Activated CD4-positive, alpha-beta T cell treated with anti-CD3 and anti-CD28 coated beads for 36 hours (primary cell): ENCODE measurements at regions of chr15 and their contacts with region 1.

Region 1: GRCh38 chr15:66497502-66498455 is at the start of gene SNAPC5:
- DNase-seq: peak; percentile 99
- ATAC-seq: peak; percentile 90
- H3K4me3 Mint-ChIP-seq: peak within 1 kb of the TSS; percentile 85
- H3K27ac Mint-ChIP-seq: peak within 1 kb of the TSS; percentile 93
- H3K4me1 Mint-ChIP-seq: peaks cover 56% of the 10 kb centered on the region
- H3K27me3 Mint-ChIP-seq: no peaks in the 10 kb centered on the region
- total RNA-seq, gene SNAPC5: 25.7 to 30.1 TPM

Region 2: GRCh38 chr15:65494071-65494470 is 1003.7 kb before region 1 on chr15:
- CTCF ChIA-PET with region 1: no interaction called
- POLR2A ChIA-PET with region 1: interaction called, 11 read pairs
- intact Hi-C with region 1: no loop called
- DNase-seq: no peak
- ATAC-seq: no peak
- H3K4me3 Mint-ChIP-seq: no peak overlapping the region
- H3K27ac Mint-ChIP-seq: no peak overlapping the region
- H3K4me1 Mint-ChIP-seq: no peaks in the 10 kb centered on the region
- H3K27me3 Mint-ChIP-seq: no peaks in the 10 kb centered on the region

Region 3: DNA sequence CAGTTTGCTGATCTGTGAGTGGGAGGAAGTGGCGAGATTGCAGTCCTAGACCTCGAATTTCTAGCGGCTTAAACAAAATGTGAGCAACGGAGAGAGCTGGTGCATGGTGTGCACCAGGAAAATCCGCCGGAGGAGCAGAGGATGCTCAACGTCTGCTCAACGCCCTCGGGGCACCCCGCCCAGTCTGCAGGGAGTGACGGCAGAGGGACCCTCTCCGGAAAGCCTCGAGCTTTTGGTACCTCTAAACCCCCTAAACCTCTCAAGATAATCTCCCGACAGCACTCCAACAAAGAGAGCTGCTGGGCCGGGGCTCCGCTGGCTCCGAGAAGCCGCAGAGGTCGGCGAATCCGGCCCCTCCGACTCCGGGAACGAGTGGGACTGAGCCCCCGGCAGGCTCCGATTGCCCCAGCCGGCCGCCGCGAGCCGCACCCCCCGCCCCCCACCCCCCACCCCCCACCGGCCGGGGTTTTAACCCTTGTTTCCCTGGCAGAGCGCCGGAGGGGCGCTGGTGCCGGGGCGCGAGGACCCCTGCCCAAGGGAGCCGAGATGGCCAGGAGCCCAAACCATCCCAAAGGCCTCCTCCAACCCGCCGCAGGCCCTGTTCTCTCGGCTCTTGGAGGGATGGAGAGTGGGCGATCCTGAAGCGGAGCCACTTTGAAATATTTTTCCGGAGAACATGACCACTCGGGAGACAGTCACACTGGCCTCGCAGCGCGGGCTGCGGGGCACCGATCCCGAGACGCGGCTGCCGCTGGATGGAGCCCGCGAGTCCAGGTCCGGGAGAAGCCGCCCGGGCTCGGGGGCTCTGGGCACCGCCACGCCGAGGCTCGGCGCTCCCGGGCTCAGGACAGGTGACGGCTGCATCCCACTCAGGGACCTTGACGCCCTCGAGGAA is 245.7 kb before region 1 on chr15:
- CTCF ChIA-PET with region 1: interaction called, 4 read pairs
- POLR2A ChIA-PET with region 1: no interaction called
- intact Hi-C with region 1: loop called in 1 of 2 experiments (anchors 1 kb)
- DNase-seq: peak; percentile 73
- ATAC-seq: peak; percentile 75
- H3K4me3 Mint-ChIP-seq: peak overlapping the region; percentile 53
- H3K27ac Mint-ChIP-seq: no peak overlapping the region
- H3K4me1 Mint-ChIP-seq: peaks cover 6% of the 10 kb centered on the region
- H3K27me3 Mint-ChIP-seq: peaks cover 58% of the 10 kb centered on the region

Region 4: GRCh38 chr15:66293419-66294156 is 204.2 kb before region 1 on chr15 and contains the start of gene DIS3L:
- CTCF ChIA-PET with region 1: interaction called, 9 read pairs
- POLR2A ChIA-PET with region 1: interaction called, 3 read pairs
- intact Hi-C with region 1: loop called (anchors 1 to 2 kb)
- DNase-seq: peak; percentile 75
- ATAC-seq: peak; percentile 80
- H3K4me3 Mint-ChIP-seq: peak within 1 kb of the TSS; percentile 86
- H3K27ac Mint-ChIP-seq: peak within 1 kb of the TSS; percentile 90
- H3K4me1 Mint-ChIP-seq: peaks cover 49% of the 10 kb centered on the region
- H3K27me3 Mint-ChIP-seq: no peaks in the 10 kb centered on the region
- total RNA-seq, gene DIS3L: 24.6 to 25.9 TPM

Region 5: DNA sequence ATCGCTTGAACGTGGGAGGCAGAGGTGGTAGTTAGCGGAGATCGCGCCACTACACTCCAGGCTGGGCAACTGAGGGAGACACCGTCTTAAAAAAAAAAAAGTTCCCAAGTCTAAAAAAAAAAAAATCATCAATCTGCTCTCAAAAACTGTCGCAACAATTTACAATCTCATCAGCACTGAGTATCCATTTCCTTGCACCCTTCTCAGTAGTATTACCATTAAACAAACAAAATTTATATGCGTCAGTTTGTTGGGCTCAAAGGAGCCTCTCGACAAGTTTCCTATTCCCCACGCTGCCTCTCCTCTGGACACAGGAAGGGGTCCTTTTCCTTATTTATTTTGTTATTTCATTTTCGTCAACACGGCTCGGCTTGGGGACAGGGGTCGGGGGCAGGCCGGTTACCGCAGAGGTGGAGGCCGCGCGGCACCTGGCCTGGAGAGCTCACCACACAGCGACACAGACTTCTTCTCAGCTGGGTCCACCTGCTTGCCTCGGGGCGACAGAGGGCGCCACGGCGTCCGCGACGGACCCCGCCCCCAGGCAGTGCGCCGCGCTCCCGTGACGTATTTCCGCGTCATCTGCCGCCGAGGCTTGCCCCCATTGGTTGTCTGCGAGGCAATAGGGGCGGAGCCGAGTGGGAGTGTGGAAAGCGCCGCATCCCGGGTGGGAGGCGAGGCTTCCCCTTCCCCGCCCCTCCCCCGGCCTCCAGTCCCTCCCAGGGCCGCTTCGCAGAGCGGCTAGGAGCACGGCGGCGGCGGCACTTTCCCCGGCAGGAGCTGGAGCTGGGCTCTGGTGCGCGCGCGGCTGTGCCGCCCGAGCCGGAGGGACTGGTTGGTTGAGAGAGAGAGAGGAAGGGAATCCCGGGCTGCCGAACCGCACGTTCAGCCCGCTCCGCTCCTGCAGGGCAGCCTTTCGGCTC is 111.3 kb before region 1 on chr15 and contains the start of gene MAP2K1:
- CTCF ChIA-PET with region 1: interaction called, 26 read pairs
- POLR2A ChIA-PET with region 1: interaction called, 25 read pairs
- intact Hi-C with region 1: loop called (anchors 1 kb)
- DNase-seq: peak; percentile 99
- ATAC-seq: peak; percentile 84
- H3K4me3 Mint-ChIP-seq: peak within 1 kb of the TSS; percentile 95
- H3K27ac Mint-ChIP-seq: peak within 1 kb of the TSS; percentile 100
- H3K4me1 Mint-ChIP-seq: peaks cover 44% of the 10 kb centered on the region
- H3K27me3 Mint-ChIP-seq: no peaks in the 10 kb centered on the region
- total RNA-seq, gene MAP2K1: 94.9 to 115 TPM

Region 6: GRCh38 chr15:66452971-66453580 is 44.7 kb before region 1 on chr15:
- CTCF ChIA-PET with region 1: no interaction called
- POLR2A ChIA-PET with region 1: no interaction called
- intact Hi-C with region 1: no loop called
- DNase-seq: no peak
- ATAC-seq: no peak
- H3K4me3 Mint-ChIP-seq: no peak overlapping the region
- H3K27ac Mint-ChIP-seq: no peak overlapping the region
- H3K4me1 Mint-ChIP-seq: peaks cover 15% of the 10 kb centered on the region
- H3K27me3 Mint-ChIP-seq: no peaks in the 10 kb centered on the region

Region 7: GRCh38 chr15:66484539-66485112 is 13.2 kb before region 1 on chr15:
- CTCF ChIA-PET with region 1: interaction called, 22 read pairs
- POLR2A ChIA-PET with region 1: no interaction called
- intact Hi-C with region 1: no loop called
- DNase-seq: no peak
- ATAC-seq: no peak
- H3K4me3 Mint-ChIP-seq: no peak overlapping the region
- H3K27ac Mint-ChIP-seq: peak overlapping the region; percentile 63
- H3K4me1 Mint-ChIP-seq: no peaks in the 10 kb centered on the region
- H3K27me3 Mint-ChIP-seq: no peaks in the 10 kb centered on the region